Sigmoid colon (tissue), 7 donors: ENCODE measurements at regions of chr15 and their contacts with region 1.

Region 1: GRCh38 chr15:29685155-29686078 is 136.9 kb downstream of the TJP1 start:
- DNase-seq: no peak
- H3K4me3 ChIP-seq: no peak overlapping the region
- H3K27ac ChIP-seq: no peak overlapping the region
- H3K4me1 ChIP-seq: no peaks in the 10 kb centered on the region
- H3K27me3 ChIP-seq: no peaks in the 10 kb centered on the region
- CTCF ChIP-seq: no peak
- EP300 ChIP-seq: no peak
- POLR2A ChIP-seq: no peak

Region 2: DNA sequence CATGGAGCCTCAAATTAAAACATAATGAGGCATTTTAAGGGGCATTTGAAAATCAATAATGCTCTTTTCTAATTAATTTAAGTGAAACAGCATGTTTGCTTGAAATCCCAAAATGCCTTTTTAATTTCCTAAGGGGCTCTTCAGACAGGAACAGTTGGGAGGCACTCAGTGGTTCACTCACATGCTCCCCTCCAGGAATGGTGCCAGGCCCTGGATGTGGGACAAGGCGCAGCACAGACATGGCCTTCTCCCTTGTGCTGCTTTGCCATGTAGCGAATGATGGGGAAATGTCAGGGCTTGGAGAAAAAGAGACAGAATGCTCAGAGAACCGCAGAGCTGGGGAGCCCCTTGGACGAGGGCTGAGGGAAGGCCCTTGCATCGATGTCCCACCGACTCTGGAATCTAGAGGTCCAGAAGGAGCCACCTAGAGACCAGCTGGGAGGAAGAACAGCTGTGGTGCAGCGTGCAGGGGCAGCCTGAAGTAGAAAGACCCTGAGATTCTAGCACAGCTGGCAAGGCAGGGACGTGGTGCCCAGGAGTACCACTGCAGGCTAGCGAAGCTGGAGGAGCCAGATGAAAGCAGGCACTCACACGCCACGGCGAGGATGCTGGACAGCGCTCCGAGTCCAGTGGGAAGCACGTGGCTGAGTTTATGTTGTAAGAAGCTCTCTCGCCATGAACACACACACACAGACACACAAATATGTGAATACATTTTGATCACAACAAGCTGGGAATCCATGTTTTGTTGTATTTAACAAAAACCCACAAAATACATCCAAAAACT is 442.8 kb before region 1 on chr15:
- intact Hi-C with region 1: loop called (anchors 10 kb)
- DNase-seq: no peak
- H3K4me3 ChIP-seq: no peak overlapping the region
- H3K27ac ChIP-seq: no peak overlapping the region
- H3K4me1 ChIP-seq: no peaks in the 10 kb centered on the region
- H3K27me3 ChIP-seq: no peaks in the 10 kb centered on the region
- CTCF ChIP-seq: no peak
- EP300 ChIP-seq: no peak
- POLR2A ChIP-seq: no peak

Region 3: GRCh38 chr15:29613951-29614382 is 71.5 kb before region 1 on chr15:
- intact Hi-C with region 1: no loop called
- DNase-seq: no peak
- H3K4me3 ChIP-seq: no peak overlapping the region
- H3K27ac ChIP-seq: no peak overlapping the region
- H3K4me1 ChIP-seq: no peaks in the 10 kb centered on the region
- H3K27me3 ChIP-seq: peaks cover 0 to 6% (median 0%) of the 10 kb centered on the region in 3 donors
- CTCF ChIP-seq: no peak
- EP300 ChIP-seq: no peak
- POLR2A ChIP-seq: no peak

Region 4: GRCh38 chr15:29883126-29883525 is 197.7 kb after region 1 on chr15:
- intact Hi-C with region 1: no loop called
- DNase-seq: no peak
- H3K4me3 ChIP-seq: no peak overlapping the region
- H3K27ac ChIP-seq: peak overlapping the region; percentile 36 to 66 (median 62)
- H3K4me1 ChIP-seq: peaks cover 0 to 51% (median 38%) of the 10 kb centered on the region in 4 donors
- H3K27me3 ChIP-seq: no peaks in the 10 kb centered on the region
- CTCF ChIP-seq: no peak
- EP300 ChIP-seq: no peak
- POLR2A ChIP-seq: no peak